ENCODE measurements at regions of chr5 and their contacts with region 1.

Region 1: DNA sequence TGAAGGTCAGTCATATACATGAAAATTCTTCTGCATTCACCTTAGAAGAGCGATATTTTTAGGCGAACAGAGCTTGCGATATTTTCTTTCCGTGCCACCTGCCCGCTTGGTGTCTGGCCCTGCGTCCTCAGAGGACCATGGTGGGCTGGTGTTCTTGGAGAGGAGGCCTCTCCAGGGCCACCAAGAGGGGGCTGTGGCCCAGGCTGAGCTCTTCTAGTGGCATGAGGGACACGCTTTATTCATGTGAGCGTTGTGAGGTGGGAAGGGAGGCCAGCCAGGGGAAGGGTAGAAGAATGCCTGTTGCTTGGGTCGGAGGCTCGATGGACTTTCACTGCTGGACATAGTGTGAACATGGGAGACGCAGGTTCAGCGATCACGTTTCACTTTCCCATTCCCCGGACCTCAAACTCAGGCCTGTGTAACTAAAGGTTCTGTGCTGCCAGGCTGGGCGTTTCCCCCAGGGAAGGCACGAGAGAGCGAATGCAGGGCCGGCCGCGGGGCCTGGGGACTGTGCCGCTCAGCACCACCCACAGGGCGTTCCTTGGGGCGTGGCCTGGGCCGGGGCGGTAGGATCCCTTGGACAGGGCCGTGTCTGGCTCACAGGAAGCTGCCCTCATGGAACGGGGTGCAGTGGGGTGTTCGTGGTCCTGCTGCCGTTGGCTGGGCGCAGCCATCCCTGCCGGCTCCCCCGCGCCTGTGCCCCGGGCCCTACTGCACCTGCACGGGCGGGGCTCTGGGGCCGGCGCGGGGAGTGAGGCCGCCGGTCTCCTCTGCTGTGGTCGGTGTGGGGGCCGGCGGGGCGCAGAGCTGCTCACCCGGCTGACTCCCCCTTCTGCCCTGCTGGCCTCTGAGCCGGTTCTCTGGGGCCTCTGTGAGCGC is 40.7 kb upstream of the CLPTM1L start:
- DNase-seq: peak; percentile 82
- H3K4me3 Mint-ChIP-seq: peak overlapping the region; percentile 94
- H3K27ac Mint-ChIP-seq: peak overlapping the region; percentile 97
- H3K4me1 Mint-ChIP-seq: peaks cover 18% of the 10 kb centered on the region
- H3K27me3 Mint-ChIP-seq: peaks cover 5% of the 10 kb centered on the region

Region 2: DNA sequence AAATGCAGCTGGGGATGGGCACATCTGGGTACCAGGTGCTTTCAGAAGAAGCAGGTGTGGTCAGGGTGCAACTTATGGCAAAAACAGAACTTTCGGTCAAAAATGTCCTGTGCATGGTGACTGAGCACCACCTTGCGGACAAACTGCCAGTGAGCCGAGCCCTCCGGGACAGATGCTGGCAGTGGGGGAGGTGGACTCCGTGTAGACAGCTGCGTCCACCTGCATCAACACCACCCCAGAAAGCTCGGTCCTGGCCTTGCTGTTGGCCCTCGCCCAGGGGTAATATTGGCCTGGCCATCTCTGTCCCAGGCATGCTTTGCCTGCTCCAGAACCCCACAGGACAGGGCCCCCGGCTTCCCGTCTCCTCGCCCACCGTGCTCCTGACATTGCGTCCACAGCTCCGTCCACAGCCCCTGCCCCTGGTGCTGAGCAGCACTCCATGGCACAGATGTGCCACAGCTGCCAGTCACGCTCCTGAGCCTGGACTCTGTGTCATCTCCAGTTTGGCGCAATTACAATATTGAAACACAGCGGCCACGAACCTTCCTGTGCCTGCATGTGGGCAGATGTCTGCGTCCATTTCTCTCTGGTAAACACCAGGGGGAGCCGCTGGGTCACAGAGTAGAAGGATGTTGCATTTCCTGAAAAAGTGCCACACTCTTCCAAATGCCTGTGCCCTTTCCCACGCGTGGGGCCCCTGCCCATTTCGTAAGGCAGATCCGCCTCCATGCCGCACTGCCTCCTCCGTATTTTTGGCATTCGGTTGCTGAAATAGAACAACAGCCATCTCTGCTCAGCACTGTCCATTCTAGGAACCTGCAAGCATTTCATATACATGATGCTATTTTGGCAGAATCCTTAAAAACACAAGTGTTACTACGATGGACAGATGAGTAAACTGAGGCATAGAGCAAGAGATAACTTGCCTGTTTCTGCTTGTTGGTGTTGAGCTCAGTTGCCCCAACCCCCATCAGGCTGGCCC is 217.6 kb before region 1 on chr5:
- intact Hi-C with region 1: loop called (anchors 5 kb)
- DNase-seq: peak; percentile 61
- H3K4me3 Mint-ChIP-seq: peak overlapping the region; percentile 67
- H3K27ac Mint-ChIP-seq: peak overlapping the region; percentile 56
- H3K4me1 Mint-ChIP-seq: peaks cover 8% of the 10 kb centered on the region
- H3K27me3 Mint-ChIP-seq: peaks cover 7% of the 10 kb centered on the region

Region 3: DNA sequence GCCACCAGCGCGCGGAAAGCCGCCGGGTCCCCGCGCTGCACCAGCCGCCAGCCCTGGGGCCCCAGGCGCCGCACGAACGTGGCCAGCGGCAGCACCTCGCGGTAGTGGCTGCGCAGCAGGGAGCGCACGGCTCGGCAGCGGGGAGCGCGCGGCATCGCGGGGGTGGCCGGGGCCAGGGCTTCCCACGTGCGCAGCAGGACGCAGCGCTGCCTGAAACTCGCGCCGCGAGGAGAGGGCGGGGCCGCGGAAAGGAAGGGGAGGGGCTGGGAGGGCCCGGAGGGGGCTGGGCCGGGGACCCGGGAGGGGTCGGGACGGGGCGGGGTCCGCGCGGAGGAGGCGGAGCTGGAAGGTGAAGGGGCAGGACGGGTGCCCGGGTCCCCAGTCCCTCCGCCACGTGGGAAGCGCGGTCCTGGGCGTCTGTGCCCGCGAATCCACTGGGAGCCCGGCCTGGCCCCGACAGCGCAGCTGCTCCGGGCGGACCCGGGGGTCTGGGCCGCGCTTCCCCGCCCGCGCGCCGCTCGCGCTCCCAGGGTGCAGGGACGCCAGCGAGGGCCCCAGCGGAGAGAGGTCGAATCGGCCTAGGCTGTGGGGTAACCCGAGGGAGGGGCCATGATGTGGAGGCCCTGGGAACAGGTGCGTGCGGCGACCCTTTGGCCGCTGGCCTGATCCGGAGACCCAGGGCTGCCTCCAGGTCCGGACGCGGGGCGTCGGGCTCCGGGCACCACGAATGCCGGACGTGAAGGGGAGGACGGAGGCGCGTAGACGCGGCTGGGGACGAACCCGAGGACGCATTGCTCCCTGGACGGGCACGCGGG is 90.6 kb before region 1 on chr5 and contains the start of gene TERT:
- intact Hi-C with region 1: loop called (anchors 1 kb)
- DNase-seq: peak; percentile 63
- H3K4me3 Mint-ChIP-seq: peak within 1 kb of the TSS; percentile 72
- H3K27ac Mint-ChIP-seq: no peak within 1 kb of the TSS
- H3K4me1 Mint-ChIP-seq: peaks cover 5% of the 10 kb centered on the region
- H3K27me3 Mint-ChIP-seq: peaks cover 5% of the 10 kb centered on the region
- total RNA-seq, gene TERT: 12.3 and 12.5 TPM in 2 replicates

Region 4: GRCh38 chr5:1344975-1345838 is 40.4 kb before region 1 on chr5 and contains the start of gene CLPTM1L:
- intact Hi-C with region 1: loop called (anchors 1 kb)
- DNase-seq: peak; percentile 87
- H3K4me3 Mint-ChIP-seq: peak within 1 kb of the TSS; percentile 90
- H3K27ac Mint-ChIP-seq: peak within 1 kb of the TSS; percentile 89
- H3K4me1 Mint-ChIP-seq: peaks cover 29% of the 10 kb centered on the region
- H3K27me3 Mint-ChIP-seq: no peaks in the 10 kb centered on the region
- total RNA-seq, gene CLPTM1L: 132 and 133 TPM in 2 replicates

Region 5: DNA sequence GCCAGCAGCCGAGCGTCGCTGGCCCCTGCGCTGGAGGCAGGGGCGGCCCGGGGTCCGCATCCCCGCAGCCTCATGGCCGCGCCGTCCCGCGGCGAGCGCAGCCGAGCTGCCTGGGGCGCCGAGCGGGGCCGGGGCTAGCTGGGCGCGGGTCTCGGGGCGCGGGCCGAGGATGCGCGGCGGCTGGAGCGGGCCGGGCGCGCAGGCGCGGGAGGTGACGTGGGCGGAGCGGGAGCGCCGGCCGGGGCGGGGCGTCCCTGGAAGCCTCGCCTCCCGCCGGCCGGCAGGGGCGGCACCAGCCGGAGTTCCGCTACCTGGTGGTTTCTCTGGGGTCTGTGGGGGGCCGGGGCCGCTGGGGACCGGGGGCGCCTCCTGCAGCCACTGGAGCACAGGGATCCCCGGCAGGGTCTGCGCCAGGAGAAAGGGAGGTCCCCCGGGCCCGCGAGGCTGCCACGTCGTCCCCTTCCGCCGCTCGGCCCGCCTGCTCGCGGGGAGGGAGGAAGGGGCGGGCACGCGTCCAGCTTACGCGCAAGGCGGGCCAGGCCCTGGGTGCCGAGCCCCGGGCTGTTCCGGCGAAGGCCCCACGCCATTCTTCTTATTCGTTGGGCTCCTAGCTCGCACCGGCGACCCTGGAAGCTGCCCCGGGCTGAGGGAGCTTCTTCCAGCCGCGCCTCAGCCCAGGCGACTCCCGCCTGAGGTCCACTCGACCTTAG is 138.3 kb after region 1 on chr5 and contains the start of gene LPCAT1:
- intact Hi-C with region 1: loop called (anchors 1 kb)
- DNase-seq: peak; percentile 74
- H3K4me3 Mint-ChIP-seq: peak within 1 kb of the TSS; percentile 91
- H3K27ac Mint-ChIP-seq: peak within 1 kb of the TSS; percentile 34
- H3K4me1 Mint-ChIP-seq: peaks cover 15% of the 10 kb centered on the region
- H3K27me3 Mint-ChIP-seq: no peaks in the 10 kb centered on the region
- total RNA-seq, gene LPCAT1: 103 and 110 TPM in 2 replicates

Region 6: DNA sequence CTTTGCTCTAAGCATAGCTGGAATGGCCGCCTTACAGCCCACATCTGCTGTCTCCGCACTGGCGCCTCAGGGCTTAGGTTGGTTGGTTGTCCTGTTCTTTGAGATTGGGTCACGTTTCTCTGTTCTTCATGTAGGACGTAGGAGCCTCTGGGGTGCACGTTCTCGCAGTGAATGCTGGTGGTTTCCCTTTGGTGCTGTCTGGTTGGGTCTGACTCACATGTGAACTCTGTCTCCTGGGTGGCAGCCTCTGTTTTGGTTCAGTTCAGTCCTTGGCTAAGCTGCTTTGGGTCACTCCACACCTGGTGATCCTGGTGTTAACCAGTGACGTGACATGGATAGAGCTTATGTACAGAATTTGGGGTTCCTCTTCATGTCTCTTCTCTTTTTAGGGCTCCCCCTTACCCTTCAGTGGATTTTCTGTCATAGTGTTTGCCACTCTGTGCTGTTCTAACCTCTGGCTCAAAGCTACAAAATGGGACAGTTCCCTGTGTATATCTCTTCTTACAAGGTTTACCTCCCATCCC is 150.8 kb after region 1 on chr5:
- intact Hi-C with region 1: loop called (anchors 5 kb)
- DNase-seq: peak; percentile 50
- H3K4me3 Mint-ChIP-seq: peak overlapping the region; percentile 71
- H3K27ac Mint-ChIP-seq: peak overlapping the region; percentile 79
- H3K4me1 Mint-ChIP-seq: peaks cover 20% of the 10 kb centered on the region
- H3K27me3 Mint-ChIP-seq: peaks cover 25% of the 10 kb centered on the region

Region 7: GRCh38 chr5:1792842-1793266 is 407.2 kb after region 1 on chr5:
- intact Hi-C with region 1: loop called (anchors 5 kb)
- DNase-seq: peak; percentile 78
- H3K4me3 Mint-ChIP-seq: peak overlapping the region; percentile 80
- H3K27ac Mint-ChIP-seq: peak overlapping the region; percentile 96
- H3K4me1 Mint-ChIP-seq: peaks cover 80% of the 10 kb centered on the region
- H3K27me3 Mint-ChIP-seq: peaks cover 1% of the 10 kb centered on the region